ENCODE measurements at regions of chr5 and their contacts with region 1.

Region 1: DNA sequence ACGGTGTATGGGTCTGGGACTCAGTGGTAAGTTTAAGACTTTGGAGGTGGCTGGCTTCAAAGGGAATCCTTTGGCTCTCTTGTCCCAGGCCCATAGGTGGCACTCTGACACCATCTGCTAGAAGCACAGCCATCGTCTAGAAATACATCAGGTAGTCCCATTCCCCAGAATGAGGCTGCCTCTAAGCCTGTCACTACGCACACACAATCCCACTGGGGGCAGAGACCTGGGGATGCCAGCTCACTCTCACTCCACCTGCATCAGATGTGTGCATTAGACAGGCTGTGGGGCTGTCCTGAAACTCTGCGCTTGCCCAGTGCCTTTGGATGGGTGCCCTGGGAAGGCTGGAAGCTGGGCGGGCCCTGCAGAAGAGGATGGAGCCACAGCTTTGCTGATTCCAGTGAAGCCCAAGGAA is 127.5 kb upstream of the PANK3 start:
- DNase-seq: peak; percentile 68
- H3K4me3 ChIP-seq: no peak overlapping the region
- H3K4me3 Mint-ChIP-seq: no peak overlapping the region
- H3K27ac Mint-ChIP-seq: peak overlapping the region; percentile 30
- H3K4me1 ChIP-seq: no peaks in the 10 kb centered on the region
- H3K4me1 Mint-ChIP-seq: no peaks in the 10 kb centered on the region
- H3K27me3 ChIP-seq: no peaks in the 10 kb centered on the region
- H3K27me3 Mint-ChIP-seq: no peaks in the 10 kb centered on the region
- CTCF ChIP-seq: peak; percentile 63 to 84

Region 2: DNA sequence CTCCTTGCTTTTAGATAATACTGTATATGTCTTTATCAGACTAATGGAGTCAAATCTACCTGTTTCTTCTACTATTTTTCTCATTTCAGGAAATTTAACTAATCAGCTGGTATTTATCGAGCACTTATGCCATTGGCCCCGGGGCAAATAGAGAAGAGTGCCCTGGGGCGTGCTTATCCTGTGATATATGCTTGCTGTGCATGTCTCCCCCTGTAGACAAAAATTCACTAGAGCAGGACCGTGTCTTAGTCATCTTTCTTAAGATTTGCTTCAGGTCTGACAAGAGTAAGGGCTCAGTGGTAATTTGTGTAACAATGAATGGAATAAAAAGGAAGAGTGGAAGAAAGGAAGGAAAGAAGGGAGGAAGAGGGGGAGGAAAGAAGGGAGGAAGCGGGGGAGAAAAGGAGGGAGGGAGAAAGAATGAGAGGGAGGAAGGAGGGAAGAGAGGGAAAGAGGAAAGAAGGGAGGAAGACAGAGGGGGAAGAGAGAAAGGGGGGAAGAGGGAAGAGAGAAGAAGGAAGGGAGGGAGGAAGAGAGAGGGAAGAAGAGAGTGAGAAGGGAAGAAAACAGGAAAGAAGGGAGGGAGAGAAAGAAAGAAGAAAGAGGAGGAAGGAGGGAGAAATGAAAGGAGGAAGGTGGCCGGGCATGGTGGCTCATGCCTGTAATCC is 168.2 kb after region 1 on chr5:
- CTCF ChIA-PET with region 1: no interaction called
- POLR2A ChIA-PET with region 1: no interaction called
- intact Hi-C with region 1: loop called (anchors 5 kb)
- DNase-seq: peak; percentile 33 to 47
- H3K4me3 ChIP-seq: no peak overlapping the region
- H3K4me3 Mint-ChIP-seq: no peak overlapping the region
- H3K27ac Mint-ChIP-seq: no peak overlapping the region
- H3K4me1 ChIP-seq: peaks cover 6% of the 10 kb centered on the region; the same call in 1 of the 2 replicates
- H3K4me1 Mint-ChIP-seq: peaks cover 7% of the 10 kb centered on the region
- H3K27me3 ChIP-seq: no peaks in the 10 kb centered on the region
- H3K27me3 Mint-ChIP-seq: peaks cover 4% of the 10 kb centered on the region
- CTCF ChIP-seq: peak; percentile 45 to 63

Region 3: DNA sequence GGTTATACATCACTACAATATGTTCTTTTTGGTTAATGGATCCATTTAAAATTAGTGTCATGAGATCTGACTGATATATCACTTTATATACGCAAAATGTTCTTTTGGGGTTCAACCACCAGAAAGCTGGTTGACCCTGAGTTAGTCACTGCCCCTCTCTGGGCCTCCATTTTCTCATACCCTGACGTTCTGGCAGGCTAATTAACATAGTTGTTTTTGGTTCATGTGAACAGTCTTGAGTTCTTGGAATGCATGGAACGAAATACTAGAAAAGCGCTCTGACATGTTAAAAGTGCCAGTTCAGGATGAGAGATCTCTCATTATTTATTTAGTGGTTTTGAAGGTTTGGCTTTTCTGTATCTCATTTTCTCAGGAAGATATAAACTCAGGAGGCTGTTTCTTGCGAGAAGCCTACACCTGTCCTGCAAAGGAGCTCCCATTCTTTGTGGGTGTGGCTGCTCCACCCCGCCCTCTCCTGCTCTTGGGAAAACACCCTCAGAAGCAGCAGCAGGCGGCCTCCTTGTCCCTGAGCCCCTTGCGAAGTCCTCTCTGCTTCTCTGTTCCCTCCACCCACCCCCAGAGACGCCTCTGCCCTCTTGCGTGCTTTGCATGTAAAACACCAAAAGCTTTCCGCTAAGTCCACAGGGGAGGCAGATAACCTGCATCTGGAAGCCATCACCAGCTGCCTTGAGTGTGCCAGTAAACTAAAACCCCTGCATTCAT is 174.9 kb after region 1 on chr5:
- CTCF ChIA-PET with region 1: no interaction called
- POLR2A ChIA-PET with region 1: no interaction called
- intact Hi-C with region 1: loop called (anchors 1 kb)
- DNase-seq: peak in 1 of 2 experiments; percentile 11
- H3K4me3 ChIP-seq: no peak overlapping the region
- H3K4me3 Mint-ChIP-seq: no peak overlapping the region
- H3K27ac Mint-ChIP-seq: no peak overlapping the region
- H3K4me1 ChIP-seq: no peaks in the 10 kb centered on the region
- H3K4me1 Mint-ChIP-seq: no peaks in the 10 kb centered on the region
- H3K27me3 ChIP-seq: peaks cover 1% of the 10 kb centered on the region; the same call in 1 of the 2 replicates
- H3K27me3 Mint-ChIP-seq: no peaks in the 10 kb centered on the region
- CTCF ChIP-seq: no peak

Region 4: GRCh38 chr5:168947212-168947868 is 240.7 kb after region 1 on chr5:
- CTCF ChIA-PET with region 1: no interaction called
- POLR2A ChIA-PET with region 1: no interaction called
- intact Hi-C with region 1: loop called (anchors 1 kb)
- DNase-seq: peak; percentile 71 to 77
- H3K4me3 ChIP-seq: no peak overlapping the region
- H3K4me3 Mint-ChIP-seq: no peak overlapping the region
- H3K27ac Mint-ChIP-seq: peak overlapping the region; percentile 80
- H3K4me1 ChIP-seq: peaks cover 34% of the 10 kb centered on the region
- H3K4me1 Mint-ChIP-seq: peaks cover 33% of the 10 kb centered on the region
- H3K27me3 ChIP-seq: no peaks in the 10 kb centered on the region
- H3K27me3 Mint-ChIP-seq: no peaks in the 10 kb centered on the region
- CTCF ChIP-seq: peak; percentile 86 to 88

Region 5: DNA sequence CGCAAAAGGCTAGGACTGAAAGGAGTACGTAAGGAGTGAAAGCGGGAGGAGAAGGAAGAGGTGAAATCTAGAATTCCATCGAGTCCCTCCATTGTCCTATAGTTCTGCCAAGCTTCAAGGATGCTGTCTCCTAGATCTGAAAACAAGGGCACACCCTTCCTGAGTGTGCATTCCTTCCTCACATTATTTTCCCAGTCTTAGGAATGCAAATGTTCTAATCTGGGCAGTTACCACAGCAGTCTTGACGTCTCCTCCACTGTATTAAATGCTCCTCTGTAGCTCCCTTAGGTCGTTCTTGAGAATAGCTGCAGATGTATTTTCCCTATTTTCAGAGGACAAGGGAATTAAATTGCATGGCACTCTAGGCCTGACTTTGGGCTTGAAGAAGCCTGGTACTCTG is 466.7 kb after region 1 on chr5:
- CTCF ChIA-PET with region 1: no interaction called
- POLR2A ChIA-PET with region 1: no interaction called
- intact Hi-C with region 1: loop called (anchors 10 kb)
- DNase-seq: no peak
- H3K4me3 ChIP-seq: no peak overlapping the region
- H3K4me3 Mint-ChIP-seq: no peak overlapping the region
- H3K27ac Mint-ChIP-seq: no peak overlapping the region
- H3K4me1 ChIP-seq: peaks cover 19% of the 10 kb centered on the region
- H3K4me1 Mint-ChIP-seq: peaks cover 34% of the 10 kb centered on the region
- H3K27me3 ChIP-seq: no peaks in the 10 kb centered on the region
- H3K27me3 Mint-ChIP-seq: no peaks in the 10 kb centered on the region
- CTCF ChIP-seq: no peak

Region 6: GRCh38 chr5:169197343-169197742 is 490.7 kb after region 1 on chr5:
- CTCF ChIA-PET with region 1: no interaction called
- POLR2A ChIA-PET with region 1: no interaction called
- intact Hi-C with region 1: loop called (anchors 1 kb)
- DNase-seq: peak in 1 of 2 experiments; percentile 21
- H3K4me3 ChIP-seq: no peak overlapping the region
- H3K4me3 Mint-ChIP-seq: no peak overlapping the region
- H3K27ac Mint-ChIP-seq: no peak overlapping the region
- H3K4me1 ChIP-seq: no peaks in the 10 kb centered on the region
- H3K4me1 Mint-ChIP-seq: no peaks in the 10 kb centered on the region
- H3K27me3 ChIP-seq: no peaks in the 10 kb centered on the region
- H3K27me3 Mint-ChIP-seq: no peaks in the 10 kb centered on the region
- CTCF ChIP-seq: peak in 1 of 2 experiments; percentile 32

Measured in Caco-2 (cell line).